MCF 10A (cell line): ENCODE measurements at regions of chr17 and their contacts with region 1.

Region 1: GRCh38 chr17:40622509-40622928 is 25.1 kb downstream of the SMARCE1 start:
- DNase-seq: no peak
- H3K4me3 Mint-ChIP-seq: no peak overlapping the region
- H3K27ac Mint-ChIP-seq: no peak overlapping the region
- H3K4me1 Mint-ChIP-seq: no peaks in the 10 kb centered on the region
- H3K27me3 Mint-ChIP-seq: no peaks in the 10 kb centered on the region
- CTCF ChIP-seq: no peak

Region 2: DNA sequence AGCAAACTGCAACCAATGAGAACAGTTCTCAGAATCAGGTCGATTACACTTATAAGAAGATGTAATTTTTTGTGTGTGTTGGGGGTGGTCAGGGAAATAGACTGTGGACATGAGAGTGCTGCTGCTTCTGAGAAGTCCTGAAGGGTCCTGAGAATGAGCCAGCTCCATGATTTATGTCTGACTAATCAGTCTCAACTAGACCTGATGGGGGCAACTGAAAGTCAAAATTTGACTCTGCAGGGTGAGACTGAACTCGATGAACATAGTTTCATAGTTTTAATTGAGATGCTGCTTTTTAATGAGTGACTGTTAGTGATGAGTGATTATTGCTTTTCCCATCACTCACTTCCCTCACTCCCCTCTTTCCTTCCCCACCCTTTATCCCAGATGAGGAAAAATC is 12.2 kb before region 1 on chr17:
- CTCF ChIA-PET with region 1: interaction called, 16 read pairs
- POLR2A ChIA-PET with region 1: interaction called, 3 read pairs
- intact Hi-C with region 1: no loop called
- DNase-seq: no peak
- H3K4me3 Mint-ChIP-seq: no peak overlapping the region
- H3K27ac Mint-ChIP-seq: no peak overlapping the region
- H3K4me1 Mint-ChIP-seq: no peaks in the 10 kb centered on the region
- H3K27me3 Mint-ChIP-seq: peaks cover 47% of the 10 kb centered on the region
- CTCF ChIP-seq: no peak

Region 3: GRCh38 chr17:40791787-40792436 is 169.4 kb after region 1 on chr17:
- CTCF ChIA-PET with region 1: interaction called, 68 read pairs
- POLR2A ChIA-PET with region 1: interaction called, 7 read pairs
- intact Hi-C with region 1: loop called (anchors 1 kb)
- DNase-seq: peak; percentile 49
- H3K4me3 Mint-ChIP-seq: no peak overlapping the region
- H3K27ac Mint-ChIP-seq: no peak overlapping the region
- H3K4me1 Mint-ChIP-seq: no peaks in the 10 kb centered on the region
- H3K27me3 Mint-ChIP-seq: peaks cover 15% of the 10 kb centered on the region
- CTCF ChIP-seq: peak; percentile 56

Region 4: GRCh38 chr17:41322094-41322902 is 699.8 kb after region 1 on chr17:
- CTCF ChIA-PET with region 1: no interaction called
- POLR2A ChIA-PET with region 1: no interaction called
- intact Hi-C with region 1: loop called (anchors 10 kb)
- DNase-seq: peak; percentile 61
- H3K4me3 Mint-ChIP-seq: no peak overlapping the region
- H3K27ac Mint-ChIP-seq: no peak overlapping the region
- H3K4me1 Mint-ChIP-seq: no peaks in the 10 kb centered on the region
- H3K27me3 Mint-ChIP-seq: no peaks in the 10 kb centered on the region
- CTCF ChIP-seq: peak; percentile 76